Activated naive CD4-positive, alpha-beta T cell treated with anti-CD3 and anti-CD28 coated beads for 36 hours (primary cell): ENCODE measurements at regions of chr22 and their contacts with region 1.

Region 1: GRCh38 chr22:40636380-40637182 is at the start of gene MRTFA:
- DNase-seq: peak; percentile 100
- H3K4me3 Mint-ChIP-seq: peak within 1 kb of the TSS; percentile 87
- H3K27ac Mint-ChIP-seq: peak within 1 kb of the TSS; percentile 92
- H3K4me1 Mint-ChIP-seq: peaks cover 39% of the 10 kb centered on the region
- H3K27me3 Mint-ChIP-seq: no peaks in the 10 kb centered on the region
- total RNA-seq, gene MRTFA: 47.2 to 48.9 TPM

Region 2: GRCh38 chr22:40525249-40525884 is 111.2 kb before region 1 on chr22:
- CTCF ChIA-PET with region 1: interaction called, 12 read pairs
- intact Hi-C with region 1: loop called (anchors 2 kb)
- DNase-seq: peak; percentile 88
- H3K4me3 Mint-ChIP-seq: no peak overlapping the region
- H3K27ac Mint-ChIP-seq: peak overlapping the region; percentile 56
- H3K4me1 Mint-ChIP-seq: peaks cover 51% of the 10 kb centered on the region
- H3K27me3 Mint-ChIP-seq: no peaks in the 10 kb centered on the region

Region 3: GRCh38 chr22:40583053-40583741 is 53.4 kb before region 1 on chr22:
- CTCF ChIA-PET with region 1: no interaction called
- intact Hi-C with region 1: loop called (anchors 1 kb)
- DNase-seq: peak; percentile 49
- H3K4me3 Mint-ChIP-seq: no peak overlapping the region
- H3K27ac Mint-ChIP-seq: peak overlapping the region; percentile 34
- H3K4me1 Mint-ChIP-seq: peaks cover 42% of the 10 kb centered on the region
- H3K27me3 Mint-ChIP-seq: no peaks in the 10 kb centered on the region

Region 4: GRCh38 chr22:40818747-40819598 is 182.4 kb after region 1 on chr22 and contains the start of gene SLC25A17:
- CTCF ChIA-PET with region 1: no interaction called
- intact Hi-C with region 1: loop called (anchors 2 kb)
- DNase-seq: peak; percentile 89
- H3K4me3 Mint-ChIP-seq: peak within 1 kb of the TSS; percentile 94
- H3K27ac Mint-ChIP-seq: peak within 1 kb of the TSS; percentile 83
- H3K4me1 Mint-ChIP-seq: peaks cover 34% of the 10 kb centered on the region
- H3K27me3 Mint-ChIP-seq: no peaks in the 10 kb centered on the region
- total RNA-seq, gene SLC25A17: 23.0 to 24.6 TPM